Colonic mucosa (tissue), 4 donors: ENCODE measurements at regions of chr10 and their contacts with region 1.

Region 1: GRCh38 chr10:70758757-70759514 is 26.2 kb downstream of the TBATA start:
- DNase-seq: peak; percentile 74
- H3K4me3 ChIP-seq: no peak overlapping the region
- H3K27ac ChIP-seq: no peak overlapping the region
- H3K4me1 ChIP-seq: no peaks in the 10 kb centered on the region
- H3K27me3 ChIP-seq: no peaks in the 10 kb centered on the region
- CTCF ChIP-seq: peak; percentile 50

Region 2: GRCh38 chr10:70461215-70461986 is 297.5 kb before region 1 on chr10:
- intact Hi-C with region 1: loop called (anchors 5 kb)
- DNase-seq: peak; percentile 52
- H3K4me3 ChIP-seq: no peak overlapping the region
- H3K27ac ChIP-seq: no peak overlapping the region
- H3K4me1 ChIP-seq: peaks cover 4% of the 10 kb centered on the region
- H3K27me3 ChIP-seq: peaks cover 15% of the 10 kb centered on the region
- CTCF ChIP-seq: peak; percentile 70

Region 3: DNA sequence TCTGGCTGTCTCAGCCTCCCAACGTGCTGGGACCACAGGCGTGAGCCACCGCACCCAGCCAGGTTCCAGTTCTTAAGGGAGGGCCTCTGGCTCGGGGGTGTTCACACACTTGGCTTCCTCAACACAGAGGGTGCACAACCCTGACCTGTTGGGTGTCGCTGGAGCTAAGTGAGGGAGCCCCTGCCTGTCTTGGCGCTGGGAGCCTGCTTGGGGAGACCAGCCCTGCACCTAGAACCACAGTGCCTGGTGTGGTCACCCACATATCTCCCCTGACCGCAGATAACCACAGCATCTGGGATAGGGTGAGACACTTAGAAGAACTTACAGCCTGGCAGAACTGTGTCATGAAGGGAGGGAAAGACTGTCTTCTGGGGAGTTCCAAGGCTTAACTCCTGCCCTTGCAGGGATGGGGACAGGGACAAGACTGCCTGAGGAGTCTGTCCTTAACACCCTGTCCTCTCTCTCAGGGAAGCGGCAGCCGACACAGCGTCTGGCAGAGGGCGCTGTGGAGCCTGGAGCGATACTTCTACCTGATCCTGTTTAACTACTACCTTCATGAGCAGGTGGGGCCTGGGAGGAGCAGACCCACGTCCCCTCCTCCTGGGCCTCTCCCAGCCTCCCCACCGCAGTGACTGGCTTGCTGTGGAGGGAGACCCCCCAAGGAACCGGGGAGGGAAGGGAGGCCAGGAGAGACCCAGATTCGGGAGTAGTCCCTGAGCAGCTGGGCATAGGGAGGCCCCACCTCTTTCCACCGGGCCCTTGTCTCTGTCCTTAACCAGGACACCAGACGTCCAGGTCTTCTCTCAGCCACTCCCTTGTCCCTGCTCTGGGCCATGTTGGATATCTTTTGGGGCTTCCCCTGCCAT is 221.4 kb before region 1 on chr10:
- intact Hi-C with region 1: no loop called
- DNase-seq: peak; percentile 54
- H3K4me3 ChIP-seq: no peak overlapping the region
- H3K27ac ChIP-seq: no peak overlapping the region
- H3K4me1 ChIP-seq: no peaks in the 10 kb centered on the region
- H3K27me3 ChIP-seq: no peaks in the 10 kb centered on the region
- CTCF ChIP-seq: peak; percentile 40

Region 4: DNA sequence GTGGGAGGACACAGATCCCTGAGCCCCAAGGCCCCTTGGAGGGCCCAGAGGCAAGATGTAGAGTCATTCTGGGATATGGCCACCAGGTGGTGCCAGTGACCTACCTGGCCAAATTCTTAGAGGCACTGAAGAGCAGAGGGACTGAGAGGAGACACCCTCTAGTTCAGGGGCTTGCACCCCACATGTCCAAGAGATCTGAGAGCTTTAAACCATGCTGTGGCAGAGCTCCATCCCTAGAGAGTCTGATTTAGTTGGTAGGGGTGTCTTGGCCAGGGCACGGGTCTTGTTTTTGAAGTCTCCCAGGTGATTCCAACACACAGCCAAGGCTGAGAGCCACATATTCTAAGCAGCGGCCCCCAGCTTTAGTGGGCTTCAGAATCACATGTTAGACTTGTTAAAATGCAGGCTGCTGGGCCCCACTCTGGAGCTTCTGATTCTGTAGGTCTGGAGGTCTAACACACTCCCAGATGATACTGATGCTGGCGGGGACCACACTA is 208.9 kb before region 1 on chr10:
- intact Hi-C with region 1: loop called (anchors 1 kb)
- DNase-seq: peak; percentile 69
- H3K4me3 ChIP-seq: no peak overlapping the region
- H3K27ac ChIP-seq: no peak overlapping the region
- H3K4me1 ChIP-seq: no peaks in the 10 kb centered on the region
- H3K27me3 ChIP-seq: no peaks in the 10 kb centered on the region
- CTCF ChIP-seq: peak; percentile 92

Region 5: GRCh38 chr10:70619271-70620019 is 139.5 kb before region 1 on chr10:
- intact Hi-C with region 1: loop called (anchors 10 kb)
- DNase-seq: no peak
- H3K4me3 ChIP-seq: no peak overlapping the region
- H3K27ac ChIP-seq: no peak overlapping the region
- H3K4me1 ChIP-seq: no peaks in the 10 kb centered on the region
- H3K27me3 ChIP-seq: no peaks in the 10 kb centered on the region
- CTCF ChIP-seq: no peak

Region 6: GRCh38 chr10:70956029-70956759 is 197.3 kb after region 1 on chr10:
- intact Hi-C with region 1: no loop called
- DNase-seq: no peak
- H3K4me3 ChIP-seq: no peak overlapping the region
- H3K27ac ChIP-seq: no peak overlapping the region
- H3K4me1 ChIP-seq: no peaks in the 10 kb centered on the region
- H3K27me3 ChIP-seq: no peaks in the 10 kb centered on the region
- CTCF ChIP-seq: no peak